ENCODE measurements at regions of chr10 and their contacts with region 1.

Region 1: DNA sequence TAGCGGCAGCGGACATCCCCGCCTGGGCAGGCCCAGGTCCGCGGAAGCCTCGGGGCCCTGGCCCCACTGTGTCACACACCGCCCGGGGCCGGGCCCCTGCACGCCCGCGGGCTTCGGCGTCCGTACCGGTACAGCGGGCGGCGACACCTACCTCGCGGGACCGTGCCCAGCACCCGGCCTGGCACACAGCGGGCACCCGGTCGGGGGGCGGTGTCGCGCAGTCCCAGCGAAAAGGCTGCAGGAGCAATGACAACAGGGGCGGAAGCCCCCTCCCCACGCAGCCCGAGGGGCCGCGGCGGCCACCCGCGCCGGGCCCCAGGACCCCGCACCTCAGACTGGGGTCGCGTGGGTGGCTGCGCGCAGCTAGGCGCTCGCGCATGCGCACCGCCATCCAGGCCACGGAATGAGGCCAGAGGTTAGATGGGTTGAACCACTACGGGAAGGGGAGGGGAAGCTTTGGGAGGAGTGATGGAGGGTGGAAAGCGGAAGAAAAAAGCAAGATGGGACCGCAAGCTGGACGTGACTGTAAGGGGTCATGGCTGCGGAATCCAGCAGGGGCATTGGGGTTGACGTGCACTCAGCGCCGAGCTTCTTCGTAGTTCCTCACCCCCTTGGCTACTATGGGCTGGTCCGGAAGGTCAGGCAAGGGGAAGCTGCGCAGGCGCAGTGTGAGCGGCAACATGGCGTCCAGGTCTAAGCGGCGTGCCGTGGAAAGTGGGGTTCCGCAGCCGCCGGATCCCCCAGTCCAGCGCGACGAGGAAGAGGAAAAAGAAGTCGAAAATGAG is at the starts of genes BCCIP and UROS:
- DNase-seq: peak; percentile 93 to 96 (median 93)
- H3K4me3 ChIP-seq: peak within 1 kb of the TSS; percentile 85
- H3K4me3 Mint-ChIP-seq: peak within 1 kb of the TSS; percentile 75
- H3K27ac ChIP-seq: peak within 1 kb of the TSS; percentile 83 to 93
- H3K27ac Mint-ChIP-seq: peak within 1 kb of the TSS in 6 of 7 donors; percentile 31 to 80 (median 39)
- H3K4me1 ChIP-seq: peaks cover 30 to 33% of the 10 kb centered on the region in 2 donors
- H3K4me1 Mint-ChIP-seq: peaks cover 32% of the 10 kb centered on the region
- H3K27me3 ChIP-seq: no peaks in the 10 kb centered on the region
- H3K27me3 Mint-ChIP-seq: no peaks in the 10 kb centered on the region
- CTCF ChIP-seq: no peak
- polyA plus RNA-seq, gene BCCIP: 16.0 to 61.7 (median 59.3) TPM
- polyA plus RNA-seq, gene UROS: 18.1 to 42.3 (median 39.8) TPM

Region 2: GRCh38 chr10:125719146-125720001 is 103.7 kb before region 1 on chr10 and contains the start of gene EDRF1:
- intact Hi-C with region 1: loop called (anchors 2 to 10 kb)
- DNase-seq: peak; percentile 98 to 99 (median 98)
- H3K4me3 ChIP-seq: peak within 1 kb of the TSS; percentile 86 to 99 (median 92)
- H3K4me3 Mint-ChIP-seq: peak within 1 kb of the TSS; percentile 98
- H3K27ac ChIP-seq: peak within 1 kb of the TSS; percentile 78 to 99
- H3K27ac Mint-ChIP-seq: peak within 1 kb of the TSS; percentile 92 to 98 (median 96)
- H3K4me1 ChIP-seq: peaks cover 14 to 25% of the 10 kb centered on the region in 2 donors
- H3K4me1 Mint-ChIP-seq: peaks cover 15% of the 10 kb centered on the region
- H3K27me3 ChIP-seq: no peaks in the 10 kb centered on the region
- H3K27me3 Mint-ChIP-seq: peaks cover 0 to 2% (median 0%) of the 10 kb centered on the region in 3 donors
- CTCF ChIP-seq: no peak
- polyA plus RNA-seq, gene EDRF1: 4.6 to 21.4 (median 5.3) TPM

Region 3: GRCh38 chr10:126036515-126036914 is 213.4 kb after region 1 on chr10:
- intact Hi-C with region 1: loop called (anchors 5 kb)
- DNase-seq: peak in 2 of 3 donors; percentile 17 to 34
- H3K4me3 ChIP-seq: no peak overlapping the region
- H3K4me3 Mint-ChIP-seq: no peak overlapping the region
- H3K27ac ChIP-seq: no peak overlapping the region
- H3K27ac Mint-ChIP-seq: peak overlapping the region in 6 of 7 donors; percentile 3 to 83 (median 66)
- H3K4me1 ChIP-seq: peaks cover 15 to 25% of the 10 kb centered on the region in 2 donors
- H3K4me1 Mint-ChIP-seq: peaks cover 27% of the 10 kb centered on the region
- H3K27me3 ChIP-seq: no peaks in the 10 kb centered on the region
- H3K27me3 Mint-ChIP-seq: peaks cover 0 to 3% (median 0%) of the 10 kb centered on the region in 3 donors
- CTCF ChIP-seq: no peak

Region 4: DNA sequence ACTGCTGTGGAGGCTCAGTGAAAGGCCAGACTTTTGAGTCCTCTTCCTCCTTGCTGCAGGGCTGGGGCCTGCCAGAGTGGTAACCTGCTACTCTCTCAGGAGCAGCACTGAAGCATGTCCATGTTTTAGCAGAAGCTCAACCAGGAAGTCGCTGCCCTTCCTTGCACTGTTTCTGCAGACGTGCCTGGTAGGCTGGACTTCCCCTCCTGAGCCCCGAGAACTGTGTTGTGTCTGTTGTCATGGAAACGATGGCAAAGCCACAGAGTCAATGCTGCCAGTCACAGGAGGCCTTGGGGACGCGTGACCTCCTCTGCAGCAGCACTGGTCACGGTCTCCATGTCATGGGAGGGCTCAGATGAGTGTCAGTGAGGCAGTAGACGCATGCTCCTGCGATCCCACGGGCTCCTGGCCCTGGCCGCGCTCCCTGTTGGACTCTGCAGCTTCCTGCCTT is 218.7 kb after region 1 on chr10:
- intact Hi-C with region 1: loop called (anchors 5 kb)
- DNase-seq: peak; percentile 100
- H3K4me3 ChIP-seq: no peak overlapping the region
- H3K4me3 Mint-ChIP-seq: peak overlapping the region; percentile 69 to 85
- H3K27ac ChIP-seq: peak overlapping the region; percentile 79 to 87
- H3K27ac Mint-ChIP-seq: peak overlapping the region; percentile 97 to 99 (median 98)
- H3K4me1 ChIP-seq: peaks cover 16 to 19% of the 10 kb centered on the region in 2 donors
- H3K4me1 Mint-ChIP-seq: peaks cover 17% of the 10 kb centered on the region
- H3K27me3 ChIP-seq: no peaks in the 10 kb centered on the region
- H3K27me3 Mint-ChIP-seq: peaks cover 0 to 3% (median 0%) of the 10 kb centered on the region in 3 donors
- CTCF ChIP-seq: no peak

Measured in CD14-positive monocyte (primary cell).